ENCODE measurements at regions of chr4 and their contacts with region 1.

Region 1: DNA sequence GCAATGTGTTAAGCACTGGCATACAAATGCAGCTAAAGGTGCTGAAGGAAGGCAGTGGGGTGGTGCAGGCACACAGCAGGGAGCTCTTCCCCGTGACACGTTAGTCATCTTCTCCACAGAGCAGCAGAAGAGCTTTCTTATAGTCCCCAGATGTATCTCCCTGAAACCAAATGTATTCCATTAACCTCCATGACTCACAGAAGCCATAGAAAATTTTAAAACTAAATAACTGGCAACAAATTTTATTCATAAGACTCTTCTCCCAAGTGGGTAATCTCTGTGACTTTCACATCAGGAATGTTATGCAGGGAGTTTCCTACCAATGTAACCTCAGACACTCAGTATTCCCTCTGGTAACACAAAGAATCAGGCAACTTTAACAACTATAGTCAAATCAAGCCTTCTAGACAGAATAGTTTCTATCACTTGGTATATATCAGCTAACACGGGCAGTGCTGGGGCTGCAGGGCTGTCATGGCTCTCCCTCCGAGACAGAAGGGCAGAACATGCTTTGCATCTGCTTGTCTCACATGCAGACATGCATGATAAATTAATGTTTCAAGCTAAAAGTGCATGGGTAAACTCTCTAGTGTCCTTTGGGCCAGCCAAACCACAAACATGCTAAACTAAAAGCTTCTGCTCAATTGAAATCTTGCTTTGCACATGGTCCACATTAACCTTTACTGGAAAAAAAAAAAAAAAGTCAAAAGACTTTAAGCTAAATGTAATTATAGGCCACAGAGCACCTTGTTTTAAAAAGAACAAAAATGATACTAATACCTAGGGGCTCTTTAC is 28.2 kb downstream of the ANXA5 start:
- DNase-seq: peak; percentile 59
- ATAC-seq: peak; percentile 61
- H3K4me3 ChIP-seq: no peak overlapping the region
- H3K27ac ChIP-seq: peak overlapping the region; percentile 70
- H3K4me1 ChIP-seq: peaks cover 27% of the 10 kb centered on the region
- H3K27me3 ChIP-seq: no peaks in the 10 kb centered on the region
- CTCF ChIP-seq: no peak

Region 2: GRCh38 chr4:121686255-121686654 is 17.7 kb after region 1 on chr4:
- CTCF ChIA-PET with region 1: no interaction called
- POLR2A ChIA-PET with region 1: interaction called, 7 read pairs
- intact Hi-C with region 1: loop called (anchors 2 kb)
- DNase-seq: peak; percentile 79
- ATAC-seq: peak; percentile 62
- H3K4me3 ChIP-seq: peak overlapping the region; percentile 23; the same call in 1 of the 2 replicates
- H3K27ac ChIP-seq: peak overlapping the region; percentile 100
- H3K4me1 ChIP-seq: peaks cover 57% of the 10 kb centered on the region
- H3K27me3 ChIP-seq: no peaks in the 10 kb centered on the region
- CTCF ChIP-seq: no peak

Region 3: DNA sequence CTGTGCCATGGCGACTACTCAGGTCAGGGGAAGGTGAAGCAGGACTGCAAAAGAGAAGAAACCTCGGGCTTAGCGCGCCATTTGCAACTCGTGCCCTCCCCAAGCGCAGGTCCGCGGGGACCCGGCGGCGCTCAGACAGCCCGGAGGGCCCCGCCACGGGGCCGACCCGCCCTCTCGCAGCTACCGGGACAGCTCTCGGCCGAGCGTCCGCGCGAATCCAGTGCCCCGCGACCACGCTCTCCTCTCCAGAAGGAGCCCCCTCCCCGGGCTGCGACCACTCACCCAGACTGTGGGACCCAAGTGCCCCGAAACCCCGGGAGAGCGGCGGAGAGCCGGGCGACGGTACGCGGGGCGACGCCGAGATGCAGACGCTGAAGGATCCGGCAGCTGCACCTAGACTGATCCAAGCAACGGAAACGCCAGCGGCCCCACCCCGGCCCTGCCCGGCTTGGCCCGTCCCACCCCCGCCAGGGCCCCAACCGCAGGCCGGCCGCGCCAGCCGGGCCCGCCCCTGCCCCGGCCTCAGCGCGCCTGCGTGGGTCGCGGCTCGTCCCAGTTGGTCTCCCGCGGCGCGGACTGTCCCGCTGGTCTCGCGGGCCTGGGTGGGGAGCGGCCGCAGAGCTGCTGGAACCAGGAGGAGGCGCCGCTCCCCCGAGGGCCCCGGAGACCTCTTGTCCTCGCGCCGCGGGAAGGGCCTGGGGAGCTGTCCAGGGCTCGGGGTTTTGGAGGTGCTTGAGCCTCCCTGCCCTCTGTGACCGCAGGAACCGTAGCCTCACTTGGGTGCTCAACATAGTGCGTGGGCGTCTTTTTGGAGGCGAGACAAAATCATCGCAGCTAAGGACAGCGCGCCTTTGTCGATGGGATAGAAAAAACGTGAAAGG is 28.3 kb after region 1 on chr4 and contains the start of gene ANXA5:
- CTCF ChIA-PET with region 1: no interaction called
- POLR2A ChIA-PET with region 1: interaction called, 22 read pairs
- intact Hi-C with region 1: no loop called
- DNase-seq: peak; percentile 86
- ATAC-seq: peak; percentile 84
- H3K4me3 ChIP-seq: peak within 1 kb of the TSS; percentile 89
- H3K27ac ChIP-seq: peak within 1 kb of the TSS; percentile 90
- H3K4me1 ChIP-seq: peaks cover 21% of the 10 kb centered on the region
- H3K27me3 ChIP-seq: no peaks in the 10 kb centered on the region
- CTCF ChIP-seq: peak; percentile 30; the same call in 1 of the 2 replicates
- total RNA-seq, gene ANXA5: 271 and 280 TPM in 2 replicates

Region 4: GRCh38 chr4:123547216-123548165 is 1878.9 kb after region 1 on chr4:
- CTCF ChIA-PET with region 1: no interaction called
- POLR2A ChIA-PET with region 1: no interaction called
- intact Hi-C with region 1: no loop called
- DNase-seq: peak; percentile 42
- ATAC-seq: peak; percentile 55
- H3K4me3 ChIP-seq: no peak overlapping the region
- H3K27ac ChIP-seq: 0 out of 2 replicates have a peak overlapping the region, but pooled peaks have one; percentile 20
- H3K4me1 ChIP-seq: peaks cover 5% of the 10 kb centered on the region; the same call in 1 of the 2 replicates
- H3K27me3 ChIP-seq: no peaks in the 10 kb centered on the region
- CTCF ChIP-seq: no peak

Measured in PC-3 (cell line).